Activated naive CD4-positive, alpha-beta T cell treated with anti-CD3 and anti-CD28 coated beads for 36 hours (primary cell): ENCODE measurements at regions of chr5 and their contacts with region 1.

Region 1: DNA sequence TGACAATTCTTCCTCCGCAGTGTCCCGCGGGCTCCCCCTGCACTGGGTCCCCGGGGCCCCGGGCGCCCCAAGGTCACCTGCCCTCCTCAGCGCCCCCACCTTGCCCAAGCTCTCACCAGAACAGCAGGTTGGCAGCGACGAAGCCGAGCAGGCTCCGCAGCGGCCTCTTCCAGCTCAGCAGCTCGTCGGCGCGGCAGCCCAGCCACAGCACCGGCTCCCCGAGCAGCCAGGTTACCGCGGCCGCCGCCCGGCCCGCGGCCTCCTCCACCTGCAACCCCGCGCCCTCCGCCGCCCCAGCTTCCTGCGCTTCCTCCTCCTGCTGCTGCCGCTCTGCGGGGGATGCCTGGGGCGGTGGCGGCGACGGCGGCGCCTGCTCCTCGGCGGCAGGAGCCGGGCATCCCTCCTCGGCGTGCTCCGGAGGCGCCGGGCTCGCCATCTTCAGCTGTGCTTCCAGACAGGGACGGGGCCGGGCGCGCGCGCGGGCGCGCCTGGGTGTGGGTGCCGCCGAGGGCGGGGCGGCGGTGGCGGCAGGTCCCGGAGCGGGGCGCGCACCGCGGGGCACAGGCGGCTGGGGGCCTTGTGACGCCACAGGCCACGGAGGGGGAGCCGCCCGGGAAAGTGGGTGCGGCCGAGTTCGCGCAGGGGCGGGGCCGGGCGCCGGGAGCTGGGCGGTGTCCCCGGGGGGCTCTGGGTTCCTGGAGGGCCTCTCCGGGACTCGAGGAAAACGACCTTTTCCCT is at the start of gene RETREG1:
- DNase-seq: peak; percentile 78
- H3K4me3 Mint-ChIP-seq: peak within 1 kb of the TSS; percentile 97
- H3K27ac Mint-ChIP-seq: peak within 1 kb of the TSS; percentile 81
- H3K4me1 Mint-ChIP-seq: peaks cover 34% of the 10 kb centered on the region
- H3K27me3 Mint-ChIP-seq: no peaks in the 10 kb centered on the region
- total RNA-seq, gene RETREG1: 19.3 to 20.0 TPM

Region 2: DNA sequence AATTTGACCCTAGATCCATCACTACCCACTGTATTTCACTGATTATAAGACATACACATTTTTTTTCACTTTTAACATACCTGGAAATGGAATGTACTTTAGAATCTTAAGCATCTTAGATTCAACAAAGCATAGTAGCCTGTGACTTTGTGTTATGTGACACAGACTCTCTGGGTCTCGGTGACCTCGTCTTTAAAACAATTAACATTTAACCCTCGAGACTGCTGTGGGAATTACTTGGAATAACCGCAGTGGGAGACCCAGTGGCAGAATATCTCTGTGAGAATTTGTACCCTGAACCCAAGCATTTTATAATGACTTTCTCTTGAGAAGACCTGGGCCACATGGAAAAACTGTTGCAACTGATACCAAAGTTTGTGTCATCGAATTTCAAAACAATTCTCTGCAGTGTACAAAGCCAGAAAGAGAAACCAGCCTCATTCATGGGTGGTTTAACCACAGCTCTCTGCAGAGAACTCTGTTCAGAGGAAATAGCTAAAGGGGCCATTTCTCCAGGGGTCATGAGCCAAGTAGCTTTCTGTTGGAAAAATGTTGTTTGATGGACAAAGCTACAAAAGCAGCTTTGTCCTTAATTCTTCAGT is 10.1 kb after region 1 on chr5:
- CTCF ChIA-PET with region 1: interaction called, 6 read pairs
- intact Hi-C with region 1: loop called (anchors 1 kb)
- DNase-seq: peak; percentile 66
- H3K4me3 Mint-ChIP-seq: no peak overlapping the region
- H3K27ac Mint-ChIP-seq: peak overlapping the region; percentile 77
- H3K4me1 Mint-ChIP-seq: peaks cover 46% of the 10 kb centered on the region
- H3K27me3 Mint-ChIP-seq: no peaks in the 10 kb centered on the region

Region 3: DNA sequence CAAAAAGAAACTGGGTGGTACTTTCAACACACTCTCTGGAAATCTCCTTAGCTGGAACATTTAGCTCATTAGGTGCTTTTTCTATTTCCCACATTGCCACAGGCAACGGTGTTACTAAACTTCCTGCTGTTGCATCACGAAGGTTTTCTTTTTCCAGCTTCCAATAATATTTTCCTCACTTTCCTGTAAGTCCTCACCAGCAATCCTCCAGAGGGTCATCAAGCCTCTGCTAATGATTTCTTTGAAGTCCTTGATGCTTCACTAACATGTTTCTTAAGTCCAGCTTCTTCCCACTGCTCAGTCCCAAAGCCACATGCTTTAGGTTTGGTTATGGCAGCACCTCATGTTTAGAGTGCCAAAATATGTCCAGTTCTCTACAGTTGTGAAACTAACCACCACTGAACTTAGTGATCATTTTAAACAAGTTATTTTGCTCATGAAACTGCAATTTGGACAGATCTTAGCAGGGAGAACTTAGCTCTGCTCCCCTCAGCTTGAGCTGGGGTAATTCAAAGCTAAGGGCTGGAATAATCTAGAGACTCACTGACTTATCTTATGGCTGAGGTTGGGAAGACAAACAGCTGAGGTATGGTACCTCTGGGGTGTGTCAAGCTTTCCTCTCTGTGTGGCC is 40.0 kb after region 1 on chr5:
- CTCF ChIA-PET with region 1: no interaction called
- intact Hi-C with region 1: loop called (anchors 5 kb)
- DNase-seq: no peak
- H3K4me3 Mint-ChIP-seq: no peak overlapping the region
- H3K27ac Mint-ChIP-seq: no peak overlapping the region
- H3K4me1 Mint-ChIP-seq: peaks cover 16% of the 10 kb centered on the region
- H3K27me3 Mint-ChIP-seq: no peaks in the 10 kb centered on the region

Region 4: DNA sequence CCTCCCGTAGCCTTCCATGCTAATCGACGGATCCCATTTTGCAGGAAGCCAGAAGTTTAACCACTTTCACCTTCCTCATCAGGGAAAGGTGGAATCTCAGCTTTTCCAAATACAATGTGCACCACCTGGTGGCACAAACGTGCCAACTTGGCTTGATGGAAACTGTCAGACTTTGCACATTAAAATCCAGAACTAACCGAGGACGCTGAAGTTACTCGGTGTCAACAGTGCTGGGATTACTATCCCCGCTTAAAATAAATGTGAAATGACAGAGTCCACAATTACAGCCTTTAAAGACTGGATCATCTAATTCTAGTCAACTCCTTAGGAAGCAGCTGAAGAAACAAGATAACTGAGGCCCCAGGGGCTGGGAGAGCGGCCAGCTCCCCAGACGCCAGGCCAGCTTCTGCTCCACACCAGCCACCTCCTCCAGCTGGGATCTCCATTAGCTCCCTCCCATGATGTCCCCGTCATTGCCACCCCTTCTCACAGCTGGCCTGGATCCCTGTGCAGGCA is 50.2 kb after region 1 on chr5:
- CTCF ChIA-PET with region 1: interaction called, 6 read pairs
- intact Hi-C with region 1: loop called (anchors 2 kb)
- DNase-seq: peak; percentile 53
- H3K4me3 Mint-ChIP-seq: no peak overlapping the region
- H3K27ac Mint-ChIP-seq: no peak overlapping the region
- H3K4me1 Mint-ChIP-seq: no peaks in the 10 kb centered on the region
- H3K27me3 Mint-ChIP-seq: no peaks in the 10 kb centered on the region

Region 5: DNA sequence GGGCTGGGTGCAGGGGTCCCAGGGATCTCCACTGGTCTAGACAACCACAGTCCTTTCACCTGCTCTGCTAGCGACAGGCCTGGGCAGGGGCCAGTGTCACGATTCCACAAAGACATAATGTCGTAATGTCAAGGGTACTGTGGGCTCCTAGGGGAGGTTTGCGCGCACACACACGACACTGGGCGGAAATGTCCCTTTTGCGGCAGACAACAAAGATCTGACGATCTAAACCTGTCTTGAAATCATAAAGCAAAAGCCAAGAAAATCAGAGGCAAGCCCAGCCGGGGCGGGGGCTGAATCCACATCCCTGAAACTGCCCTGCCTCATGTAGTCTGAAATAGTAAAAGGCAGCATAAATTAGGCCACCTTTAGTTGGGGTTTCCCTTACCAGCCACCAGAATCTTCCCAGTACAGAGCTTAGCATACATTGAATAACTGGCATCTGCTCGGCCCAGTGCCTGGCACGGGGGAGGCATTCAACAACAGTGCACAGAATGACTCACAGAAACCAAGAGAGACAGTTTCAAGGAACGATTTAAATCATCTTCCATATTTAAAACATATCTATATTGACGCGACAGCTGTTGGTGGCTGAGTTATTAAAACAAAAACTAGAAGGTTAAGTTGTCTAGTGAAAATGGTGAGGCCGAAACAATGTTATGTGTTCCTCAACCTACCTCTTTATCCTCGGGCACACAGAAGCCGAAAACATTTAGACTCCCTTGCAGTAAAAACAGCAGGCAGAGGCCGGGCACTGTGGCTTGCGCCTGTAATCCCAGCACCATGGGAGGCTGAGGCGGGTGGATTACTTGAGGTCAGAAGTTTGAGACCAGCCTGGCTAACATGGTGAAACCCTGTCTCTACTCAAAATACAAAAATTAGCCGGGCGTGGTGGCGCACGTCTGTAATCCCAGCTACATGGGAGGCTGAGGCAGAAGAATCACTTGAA is 168.4 kb after region 1 on chr5:
- CTCF ChIA-PET with region 1: no interaction called
- intact Hi-C with region 1: loop called (anchors 1 kb)
- DNase-seq: peak; percentile 70
- H3K4me3 Mint-ChIP-seq: no peak overlapping the region
- H3K27ac Mint-ChIP-seq: no peak overlapping the region
- H3K4me1 Mint-ChIP-seq: peaks cover 18% of the 10 kb centered on the region
- H3K27me3 Mint-ChIP-seq: no peaks in the 10 kb centered on the region

Region 6: DNA sequence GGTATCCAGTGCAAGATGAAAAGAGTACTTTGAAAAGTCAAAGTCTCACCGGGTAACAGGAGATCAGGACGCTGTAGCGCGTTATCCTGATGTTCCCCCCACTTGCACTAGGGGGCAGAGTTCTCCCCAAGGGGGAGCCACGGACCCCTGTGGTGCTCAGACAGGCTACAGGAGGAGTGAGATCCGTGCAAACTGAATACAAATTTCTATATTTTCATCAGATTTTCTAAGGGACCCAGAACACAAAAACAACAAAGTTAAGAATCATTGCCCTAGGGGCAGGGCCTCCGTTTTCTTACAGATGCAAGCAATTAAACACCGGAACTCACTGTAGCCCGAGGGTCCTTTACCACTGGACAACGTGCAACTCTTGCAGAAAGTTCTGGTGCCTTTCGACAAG is 317.4 kb after region 1 on chr5:
- CTCF ChIA-PET with region 1: no interaction called
- intact Hi-C with region 1: loop called (anchors 5 kb)
- DNase-seq: peak; percentile 64
- H3K4me3 Mint-ChIP-seq: peak overlapping the region; percentile 29
- H3K27ac Mint-ChIP-seq: no peak overlapping the region
- H3K4me1 Mint-ChIP-seq: peaks cover 17% of the 10 kb centered on the region
- H3K27me3 Mint-ChIP-seq: peaks cover 70% of the 10 kb centered on the region